SK-N-SH (cell line): ENCODE measurements at regions of chr2 and their contacts with region 1.

Region 1: DNA sequence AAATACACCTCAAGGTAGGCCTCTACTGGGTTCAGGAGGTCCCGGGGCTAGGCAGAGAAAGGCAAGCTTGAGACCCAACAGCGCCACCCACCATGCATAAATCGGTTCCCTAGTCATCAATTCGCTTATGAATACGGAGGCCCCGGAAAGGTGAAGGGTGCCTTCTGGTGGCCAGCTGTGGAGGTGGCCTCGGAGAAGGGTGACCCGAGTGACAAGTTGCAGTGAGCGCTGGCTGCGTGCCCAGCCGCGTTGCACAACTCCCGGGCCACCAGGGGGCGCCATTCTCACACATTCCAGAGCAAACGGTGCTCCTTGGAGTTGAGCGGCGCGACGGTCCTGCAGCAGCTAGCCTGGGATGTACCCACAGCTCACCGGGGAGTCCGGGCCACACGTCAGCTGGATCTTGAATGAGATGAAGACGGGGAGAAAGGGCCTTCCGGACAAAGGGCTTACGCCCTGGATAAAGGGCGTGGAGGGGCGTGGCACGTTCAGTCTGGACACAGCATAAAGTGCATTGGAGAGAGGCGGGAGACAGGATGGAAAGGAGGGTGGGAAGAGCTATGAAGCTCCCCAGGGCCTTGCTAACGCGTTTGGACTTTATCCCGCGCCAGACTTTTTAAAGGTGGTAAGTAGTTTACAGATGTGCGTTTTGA is 20.4 kb downstream of the TMSB10 start:
- DNase-seq: peak; percentile 87
- H3K4me3 ChIP-seq: peak overlapping the region; percentile 51 to 60
- H3K27ac ChIP-seq: peak overlapping the region in 1 of 2 experiments; percentile 36; a peak in 2 of 4 replicates
- H3K4me1 ChIP-seq: peaks cover 5 to 13% of the 10 kb centered on the region in 2 experiments; a peak in 2 of 4 replicates
- H3K27me3 ChIP-seq: no peaks in the 10 kb centered on the region
- CTCF ChIP-seq: peak; percentile 96
- EP300 ChIP-seq: no peak
- RAD21 ChIP-seq: peak; percentile 70

Region 2: GRCh38 chr2:84912984-84913383 is 12.9 kb before region 1 on chr2:
- CTCF ChIA-PET with region 1: interaction called, 36 read pairs
- POLR2A ChIA-PET with region 1: no interaction called
- DNase-seq: no peak
- H3K4me3 ChIP-seq: no peak overlapping the region
- H3K27ac ChIP-seq: no peak overlapping the region
- H3K4me1 ChIP-seq: no peaks in the 10 kb centered on the region
- H3K27me3 ChIP-seq: no peaks in the 10 kb centered on the region
- CTCF ChIP-seq: no peak
- EP300 ChIP-seq: no peak
- RAD21 ChIP-seq: no peak

Region 3: GRCh38 chr2:84958135-84959044 is 32.5 kb after region 1 on chr2:
- CTCF ChIA-PET with region 1: interaction called, 11 read pairs
- POLR2A ChIA-PET with region 1: no interaction called
- DNase-seq: no peak
- H3K4me3 ChIP-seq: 0 out of 4 replicates have a peak overlapping the region, but pooled peaks of 1 of the 2 experiments have one; percentile 22
- H3K27ac ChIP-seq: peak overlapping the region; percentile 51 to 97; a peak in 3 of 4 replicates
- H3K4me1 ChIP-seq: peaks cover 5 to 30% of the 10 kb centered on the region in 2 experiments; a peak in 3 of 4 replicates
- H3K27me3 ChIP-seq: no peaks in the 10 kb centered on the region
- CTCF ChIP-seq: no peak
- EP300 ChIP-seq: peak in 1 of 2 experiments; percentile 52; a peak in 1 of 4 replicates
- RAD21 ChIP-seq: no peak

Region 4: GRCh38 chr2:85011747-85012146 is 85.9 kb after region 1 on chr2:
- CTCF ChIA-PET with region 1: interaction called, 23 read pairs
- POLR2A ChIA-PET with region 1: no interaction called
- DNase-seq: peak; percentile 25
- H3K4me3 ChIP-seq: no peak overlapping the region
- H3K27ac ChIP-seq: no peak overlapping the region
- H3K4me1 ChIP-seq: peaks cover 0 to 32% of the 10 kb centered on the region in 2 experiments; a peak in 3 of 4 replicates
- H3K27me3 ChIP-seq: no peaks in the 10 kb centered on the region
- CTCF ChIP-seq: peak; percentile 41
- EP300 ChIP-seq: no peak
- RAD21 ChIP-seq: no peak

Region 5: GRCh38 chr2:85048534-85048933 is 122.7 kb after region 1 on chr2:
- CTCF ChIA-PET with region 1: interaction called, 12 read pairs
- POLR2A ChIA-PET with region 1: no interaction called
- DNase-seq: no peak
- H3K4me3 ChIP-seq: no peak overlapping the region
- H3K27ac ChIP-seq: peak overlapping the region in 1 of 2 experiments; percentile 77; a peak in 2 of 4 replicates
- H3K4me1 ChIP-seq: peaks cover 0 to 21% of the 10 kb centered on the region in 2 experiments; a peak in 2 of 4 replicates
- H3K27me3 ChIP-seq: no peaks in the 10 kb centered on the region
- CTCF ChIP-seq: no peak
- EP300 ChIP-seq: no peak
- RAD21 ChIP-seq: no peak

Region 6: DNA sequence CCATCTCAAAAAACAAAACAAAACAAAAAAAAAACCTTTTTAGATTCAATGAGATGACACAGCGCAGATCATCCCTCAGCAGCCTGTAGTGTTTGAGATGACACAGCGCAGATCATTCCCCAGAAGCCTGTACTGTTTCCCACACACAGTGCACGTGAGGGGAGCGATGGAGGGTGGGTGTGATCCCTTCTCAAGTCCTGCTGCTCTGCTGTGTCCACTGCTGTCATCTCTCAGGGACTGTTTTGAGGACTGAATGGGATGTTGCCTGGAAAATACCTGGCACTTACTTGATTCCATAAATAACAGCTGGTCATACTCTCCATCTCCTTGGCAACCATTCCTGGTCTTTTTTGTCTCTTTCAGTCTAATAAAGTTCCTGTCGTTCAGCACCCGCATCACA is 376.3 kb after region 1 on chr2:
- CTCF ChIA-PET with region 1: interaction called, 51 read pairs
- POLR2A ChIA-PET with region 1: no interaction called
- DNase-seq: no peak
- H3K4me3 ChIP-seq: no peak overlapping the region
- H3K27ac ChIP-seq: no peak overlapping the region
- H3K4me1 ChIP-seq: peaks cover 0 to 2% of the 10 kb centered on the region in 2 experiments; a peak in 2 of 4 replicates
- H3K27me3 ChIP-seq: no peaks in the 10 kb centered on the region
- CTCF ChIP-seq: no peak
- EP300 ChIP-seq: no peak
- RAD21 ChIP-seq: no peak